T-cell (primary cell): ENCODE measurements at regions of chr9 and their contacts with region 1.

Region 1: GRCh38 chr9:72990397-72991182 is 37.7 kb upstream of the ALDH1A1 start:
- DNase-seq: no peak
- ATAC-seq: no peak
- H3K4me3 ChIP-seq: no peak overlapping the region
- H3K4me3 Mint-ChIP-seq: no peak overlapping the region
- H3K27ac ChIP-seq: no peak overlapping the region
- H3K27ac Mint-ChIP-seq: no peak overlapping the region
- H3K4me1 ChIP-seq: no peaks in the 10 kb centered on the region
- H3K4me1 Mint-ChIP-seq: no peaks in the 10 kb centered on the region
- H3K27me3 ChIP-seq: no peaks in the 10 kb centered on the region
- H3K27me3 Mint-ChIP-seq: peaks cover 0 to 14% of the 10 kb centered on the region in 2 donors

Region 2: GRCh38 chr9:72912476-72913381 is 77.9 kb before region 1 on chr9:
- CTCF ChIA-PET with region 1: no interaction called
- POLR2A ChIA-PET with region 1: interaction called in 1 of 2 experiments, 10 read pairs
- DNase-seq: no peak
- ATAC-seq: no peak
- H3K4me3 ChIP-seq: no peak overlapping the region
- H3K4me3 Mint-ChIP-seq: no peak overlapping the region
- H3K27ac ChIP-seq: no peak overlapping the region
- H3K27ac Mint-ChIP-seq: no peak overlapping the region
- H3K4me1 ChIP-seq: no peaks in the 10 kb centered on the region
- H3K4me1 Mint-ChIP-seq: no peaks in the 10 kb centered on the region
- H3K27me3 ChIP-seq: no peaks in the 10 kb centered on the region
- H3K27me3 Mint-ChIP-seq: peaks cover 0 to 3% of the 10 kb centered on the region in 2 donors